PC-9 (cell line): ENCODE measurements at regions of chr21 and their contacts with region 1.

Region 1: DNA sequence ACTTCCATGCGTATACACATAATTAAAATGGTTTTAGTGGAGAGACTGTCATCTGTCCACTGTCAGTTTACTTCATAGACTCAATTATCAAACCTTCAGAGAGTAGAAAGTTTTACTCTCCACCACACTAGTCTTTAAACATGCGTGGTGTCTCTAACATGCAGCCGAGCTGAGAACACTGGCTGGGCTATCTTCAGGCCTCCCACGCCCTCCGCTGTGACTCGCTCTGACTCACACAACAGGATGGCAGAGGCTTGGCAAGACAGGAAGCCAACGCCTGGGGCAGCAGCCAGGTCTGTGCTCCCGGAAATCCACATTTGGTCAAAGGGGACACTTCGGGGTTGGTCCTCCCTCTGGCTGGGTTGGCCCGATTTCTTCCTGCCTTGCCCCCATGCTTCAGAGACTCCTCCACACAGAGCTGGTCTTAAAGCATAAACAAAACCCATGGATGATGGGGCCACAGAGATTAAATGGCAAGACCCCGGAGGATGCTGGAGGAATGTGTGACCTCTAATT is 22.7 kb upstream of the IFNGR2 start:
- DNase-seq: peak; percentile 89 to 92
- H3K4me3 ChIP-seq: peak overlapping the region; percentile 19; the same call in 1 of the 2 replicates
- H3K27ac ChIP-seq: peak overlapping the region; percentile 100
- H3K4me1 ChIP-seq: peaks cover 62% of the 10 kb centered on the region
- H3K27me3 ChIP-seq: no peaks in the 10 kb centered on the region
- CTCF ChIP-seq: no peak

Region 2: DNA sequence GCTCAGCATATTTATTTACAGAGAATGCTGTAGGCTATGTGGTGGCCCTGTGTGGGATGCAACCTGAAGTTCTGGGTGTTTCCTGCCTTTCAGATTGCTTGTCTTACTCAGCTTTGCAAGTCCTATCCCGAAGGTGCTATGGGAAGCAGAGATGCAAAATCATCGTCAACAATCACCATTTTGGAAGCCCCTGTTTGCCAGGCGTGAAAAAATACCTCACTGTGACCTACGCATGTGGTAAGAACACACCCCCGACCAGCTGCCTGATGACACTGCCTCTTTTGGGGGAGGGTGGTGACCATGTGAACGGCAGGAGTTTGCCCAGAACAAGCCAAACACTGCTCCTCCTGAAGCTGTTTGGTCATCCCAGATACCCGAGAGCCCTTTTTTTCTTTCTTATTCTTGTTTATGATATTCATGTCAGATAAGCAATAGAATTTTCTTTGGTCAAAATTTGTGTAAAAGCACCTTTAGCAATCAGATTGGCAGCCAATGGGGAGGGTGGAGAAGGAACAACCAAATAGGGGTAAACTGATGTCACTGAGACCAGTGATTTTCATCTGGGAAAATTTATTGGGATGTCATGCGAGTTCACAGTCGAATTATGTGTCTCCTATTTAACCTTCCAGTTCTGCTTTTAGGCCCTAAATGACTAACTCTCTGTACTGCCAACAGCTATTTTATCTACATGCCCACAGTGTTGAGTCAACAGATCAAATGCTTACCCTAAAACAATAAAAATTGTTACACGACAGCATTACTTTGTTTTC is 885.4 kb before region 1 on chr21:
- CTCF ChIA-PET with region 1: no interaction called
- POLR2A ChIA-PET with region 1: interaction called, 11 read pairs
- intact Hi-C with region 1: no loop called
- DNase-seq: peak; percentile 14 to 58
- H3K4me3 ChIP-seq: no peak overlapping the region
- H3K27ac ChIP-seq: no peak overlapping the region
- H3K4me1 ChIP-seq: no peaks in the 10 kb centered on the region
- H3K27me3 ChIP-seq: no peaks in the 10 kb centered on the region
- CTCF ChIP-seq: no peak

Region 3: GRCh38 chr21:33367309-33367973 is 13.1 kb before region 1 on chr21:
- CTCF ChIA-PET with region 1: no interaction called
- POLR2A ChIA-PET with region 1: interaction called, 28 read pairs
- intact Hi-C with region 1: no loop called
- DNase-seq: no peak
- H3K4me3 ChIP-seq: no peak overlapping the region
- H3K27ac ChIP-seq: no peak overlapping the region
- H3K4me1 ChIP-seq: no peaks in the 10 kb centered on the region
- H3K27me3 ChIP-seq: no peaks in the 10 kb centered on the region
- CTCF ChIP-seq: no peak